ENCODE measurements at regions of chr6 and their contacts with region 1.

Region 1: DNA sequence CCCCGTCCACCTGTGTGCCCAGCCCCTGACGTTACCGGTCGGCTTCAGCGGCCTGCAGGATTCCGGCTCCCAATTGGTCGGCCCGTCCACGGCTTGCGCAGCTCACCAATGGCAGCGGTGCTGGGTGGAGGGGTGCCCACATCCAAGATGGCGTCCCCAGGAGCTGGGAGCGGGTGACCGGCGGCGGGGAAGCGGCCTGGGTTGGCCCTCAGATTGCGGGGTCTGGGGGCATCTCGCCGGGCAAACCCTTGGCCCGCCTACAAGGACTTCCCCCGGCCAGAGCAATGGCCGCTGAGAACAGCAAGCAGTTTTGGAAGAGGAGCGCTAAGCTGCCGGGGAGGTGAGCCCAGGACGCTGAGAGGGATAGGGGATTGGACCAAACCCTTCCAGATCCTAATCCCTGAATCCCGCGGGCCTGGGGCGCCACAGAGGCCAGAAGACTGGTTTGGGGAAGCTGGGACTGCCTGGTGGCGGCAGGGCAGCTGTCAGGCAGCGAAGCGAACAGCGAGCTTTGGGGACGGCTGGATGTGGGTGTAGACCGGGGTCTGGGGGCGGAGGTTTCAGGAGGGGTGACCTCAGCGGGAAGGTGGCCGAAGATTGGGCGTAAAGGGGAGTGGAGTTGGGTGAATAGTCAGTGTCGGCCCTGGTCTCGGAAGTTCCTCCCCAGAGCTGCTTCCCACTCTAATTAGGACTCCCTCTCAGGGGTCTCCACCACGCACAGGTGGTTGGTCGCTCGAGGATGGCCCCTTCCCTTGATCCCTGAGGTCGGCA is at the starts of genes TBC1D22B and TMEM217:
- DNase-seq: peak; percentile 89 to 98
- H3K4me3 ChIP-seq: peak within 1 kb of the TSS; percentile 89 to 90
- H3K27ac ChIP-seq: peak within 1 kb of the TSS; percentile 84 to 88
- H3K4me1 ChIP-seq: peaks cover 7 to 8% of the 10 kb centered on the region in 2 donors
- H3K27me3 ChIP-seq: no peaks in the 10 kb centered on the region
- CTCF ChIP-seq: no peak
- total RNA-seq, gene TBC1D22B: 11.1 TPM
- total RNA-seq, gene TMEM217: not detected

Region 2: DNA sequence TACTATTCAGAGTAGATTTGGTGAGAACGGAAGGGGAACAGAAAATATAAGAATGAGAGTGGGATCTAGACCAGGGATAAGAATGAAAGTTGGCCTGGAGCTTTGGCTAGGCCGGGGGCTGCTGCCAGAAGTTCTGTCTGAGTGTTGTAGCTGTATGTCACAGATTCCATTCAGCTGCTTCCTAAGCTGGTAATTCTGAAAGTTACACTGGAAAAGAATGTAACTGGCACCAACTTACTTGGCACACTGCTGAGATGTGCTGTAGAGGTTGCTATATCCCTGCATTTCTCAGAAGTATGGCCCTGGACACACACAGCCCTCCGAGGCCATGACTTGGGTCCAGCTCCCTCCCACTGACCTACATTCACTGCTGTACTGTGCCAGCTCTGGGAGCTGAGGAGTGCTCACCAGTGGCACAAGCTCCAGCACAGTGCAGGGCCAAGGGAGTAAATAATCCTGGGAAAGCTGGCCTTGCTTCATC is 25.9 kb after region 1 on chr6:
- intact Hi-C with region 1: loop called (anchors 1 kb)
- DNase-seq: peak; percentile 67 to 92
- H3K4me3 ChIP-seq: no peak overlapping the region
- H3K27ac ChIP-seq: peak overlapping the region; percentile 92 to 94
- H3K4me1 ChIP-seq: peaks cover 15 to 47% of the 10 kb centered on the region in 2 donors
- H3K27me3 ChIP-seq: no peaks in the 10 kb centered on the region
- CTCF ChIP-seq: no peak

Region 3: GRCh38 chr6:37332894-37333293 is 75.1 kb after region 1 on chr6:
- intact Hi-C with region 1: no loop called
- DNase-seq: no peak
- H3K4me3 ChIP-seq: no peak overlapping the region
- H3K27ac ChIP-seq: no peak overlapping the region
- H3K4me1 ChIP-seq: no peaks in the 10 kb centered on the region
- H3K27me3 ChIP-seq: no peaks in the 10 kb centered on the region
- CTCF ChIP-seq: no peak

Measured in ascending aorta (tissue), 2 donors.